WTC11 (cell line): ENCODE measurements at regions of chr3 and their contacts with region 1.

Region 1: DNA sequence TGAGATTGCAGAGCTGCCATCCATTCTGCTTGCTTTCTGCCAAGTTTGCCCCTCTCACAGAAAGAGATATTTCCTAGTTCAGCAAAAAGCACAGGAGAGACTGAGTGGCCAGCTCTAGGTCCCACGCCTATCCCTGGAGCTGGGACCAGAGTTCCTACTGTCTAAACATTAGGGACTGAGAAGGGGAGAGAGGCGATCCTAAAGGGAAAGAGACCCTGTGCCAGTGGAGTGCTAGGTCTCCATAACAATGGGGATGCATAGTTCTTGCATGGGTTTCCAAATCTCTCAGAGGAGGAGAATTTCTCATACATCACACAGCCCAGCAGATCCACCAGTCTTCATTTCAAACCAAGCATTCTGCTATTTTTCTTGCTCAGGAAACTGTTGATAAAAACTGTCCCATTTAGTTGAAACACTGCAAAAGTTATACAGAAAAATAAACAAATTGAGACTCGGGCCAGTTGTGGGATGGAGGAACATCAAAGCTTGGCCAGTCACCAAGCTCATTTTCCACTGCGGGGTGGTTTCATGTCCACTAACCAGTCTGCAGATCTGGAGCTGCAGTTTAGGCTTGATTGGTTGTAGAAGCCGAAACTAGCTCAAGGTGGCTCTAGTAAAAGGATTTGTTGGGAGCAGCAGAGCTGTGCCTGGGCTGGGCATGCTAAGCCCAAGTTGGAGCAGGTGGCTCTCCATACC is 62.7 kb downstream of the EEFSEC start:
- DNase-seq: no peak
- ATAC-seq: peak; percentile 72
- H3K4me3 Mint-ChIP-seq: no peak overlapping the region
- H3K27ac Mint-ChIP-seq: no peak overlapping the region
- H3K4me1 Mint-ChIP-seq: peaks cover 14% of the 10 kb centered on the region
- H3K27me3 Mint-ChIP-seq: no peaks in the 10 kb centered on the region
- CTCF ChIP-seq: no peak

Region 2: DNA sequence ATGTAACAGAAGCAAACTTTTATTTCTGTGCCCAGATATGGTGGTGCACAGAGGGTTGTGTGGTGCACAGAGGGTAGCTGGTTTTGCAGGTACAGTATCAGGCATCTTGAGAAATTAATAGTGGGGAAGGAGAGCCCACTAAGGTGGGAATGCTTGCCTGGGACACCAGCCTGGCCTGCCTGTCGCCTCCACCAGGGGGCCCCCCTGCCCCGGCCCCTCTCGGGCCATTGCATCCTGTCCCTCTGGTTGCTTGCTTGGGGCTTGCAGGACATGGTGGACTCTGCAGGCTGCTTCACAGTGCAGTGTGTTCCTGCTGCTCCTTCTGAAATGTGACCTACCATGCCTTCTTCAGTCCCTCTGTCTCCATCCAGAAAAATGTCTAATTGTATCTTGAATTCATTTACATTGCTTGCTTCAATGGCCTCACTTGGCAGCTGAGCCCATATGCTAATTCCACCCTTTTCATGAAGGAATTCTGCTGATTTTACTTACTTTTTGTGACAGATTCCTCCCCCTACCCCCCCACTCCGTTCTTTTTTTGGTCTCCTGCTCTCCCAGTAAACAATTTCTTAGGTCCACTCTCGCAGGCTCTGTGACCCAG is 10.9 kb after region 1 on chr3:
- CTCF ChIA-PET with region 1: interaction called, 17 read pairs
- POLR2A ChIA-PET with region 1: no interaction called
- DNase-seq: peak; percentile 78
- ATAC-seq: peak; percentile 93
- H3K4me3 Mint-ChIP-seq: no peak overlapping the region
- H3K27ac Mint-ChIP-seq: no peak overlapping the region
- H3K4me1 Mint-ChIP-seq: peaks cover 34% of the 10 kb centered on the region
- H3K27me3 Mint-ChIP-seq: no peaks in the 10 kb centered on the region
- CTCF ChIP-seq: peak; percentile 83